GM12878 (cell line): ENCODE measurements at regions of chr9 and their contacts with region 1.

Region 1: GRCh38 chr9:15205632-15206420 is 101.2 kb downstream of the TTC39B start:
- DNase-seq: no peak
- ATAC-seq: no peak
- H3K4me3 ChIP-seq: no peak overlapping the region
- H3K27ac ChIP-seq: no peak overlapping the region
- H3K4me1 ChIP-seq: no peaks in the 10 kb centered on the region
- H3K27me3 ChIP-seq: no peaks in the 10 kb centered on the region
- CTCF ChIP-seq: no peak
- EP300 ChIP-seq: no peak
- POLR2A ChIP-seq: no peak
- RAD21 ChIP-seq: no peak

Region 2: DNA sequence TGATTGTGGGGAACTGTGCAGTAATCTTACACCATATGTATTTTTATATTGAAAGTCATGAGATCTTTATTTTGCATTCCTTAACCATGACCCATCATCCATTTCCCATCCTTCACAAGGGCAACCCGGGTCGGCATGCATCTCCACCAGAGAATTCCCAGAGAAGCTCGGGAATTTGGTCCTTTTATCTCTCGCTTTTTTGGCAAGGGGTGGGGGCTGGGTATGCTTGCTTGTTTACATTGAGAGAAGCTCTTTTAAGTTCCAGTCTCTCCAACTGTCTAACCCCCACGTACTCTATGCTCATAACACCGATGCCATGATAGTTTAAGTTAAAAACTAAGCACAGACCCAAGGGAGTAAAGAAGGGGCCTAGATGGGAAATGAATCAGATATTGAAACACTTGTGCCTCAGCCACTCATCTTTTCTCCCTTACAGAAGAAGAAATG is 782.0 kb before region 1 on chr9:
- CTCF ChIA-PET with region 1: no interaction called
- POLR2A ChIA-PET with region 1: no interaction called
- RAD21 ChIA-PET with region 1: no interaction called
- SMC1A ChIA-PET with region 1: no interaction called
- in situ Hi-C with region 1: no loop called
- intact Hi-C with region 1: no loop called
- DNase-seq: no peak
- ATAC-seq: no peak
- H3K4me3 ChIP-seq: no peak overlapping the region
- H3K27ac ChIP-seq: no peak overlapping the region
- H3K4me1 ChIP-seq: no peaks in the 10 kb centered on the region
- H3K27me3 ChIP-seq: no peaks in the 10 kb centered on the region
- CTCF ChIP-seq: no peak
- EP300 ChIP-seq: no peak
- POLR2A ChIP-seq: no peak
- RAD21 ChIP-seq: no peak

Region 3: DNA sequence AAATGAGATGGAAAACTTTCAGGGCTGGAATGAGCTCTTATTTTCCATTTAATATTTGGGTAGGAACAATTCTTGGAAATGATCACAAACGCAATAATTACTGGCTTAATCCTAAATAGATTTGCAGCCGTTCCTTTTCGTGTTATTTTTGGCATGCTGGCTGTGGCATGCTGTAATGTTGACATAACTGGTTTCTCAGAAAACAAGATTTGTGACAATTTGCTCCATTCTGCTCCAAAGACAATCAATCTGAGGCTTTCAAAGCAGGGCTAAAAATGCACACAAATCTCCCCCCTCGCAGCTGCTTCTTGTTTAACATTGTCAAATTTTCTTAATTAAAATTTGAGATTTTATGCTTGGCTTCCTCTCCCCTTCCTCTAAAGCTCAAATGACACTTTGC is 50.0 kb before region 1 on chr9:
- CTCF ChIA-PET with region 1: no interaction called
- POLR2A ChIA-PET with region 1: no interaction called
- RAD21 ChIA-PET with region 1: no interaction called
- SMC1A ChIA-PET with region 1: no interaction called
- in situ Hi-C with region 1: loop called (anchors 5 kb)
- intact Hi-C with region 1: no loop called
- DNase-seq: no peak
- ATAC-seq: no peak
- H3K4me3 ChIP-seq: no peak overlapping the region
- H3K27ac ChIP-seq: no peak overlapping the region
- H3K4me1 ChIP-seq: no peaks in the 10 kb centered on the region
- H3K27me3 ChIP-seq: no peaks in the 10 kb centered on the region
- CTCF ChIP-seq: no peak
- EP300 ChIP-seq: no peak
- POLR2A ChIP-seq: no peak
- RAD21 ChIP-seq: no peak